Activated T-helper 1 cell treated with anti-CD3 and anti-CD28 coated beads, Interleukin-12 subunit alpha, Interleukin-12 subunit beta, Interleukin-2, Interleukin-4 antibody, amounts not matched to agents 30 ng/mL and 10 ng/mL and 1 ng/mL, durations not matched to agents 14 hours and 24 hours and 36 hours (primary cell): ENCODE measurements at regions of chr5 and their contacts with region 1.

Region 1: DNA sequence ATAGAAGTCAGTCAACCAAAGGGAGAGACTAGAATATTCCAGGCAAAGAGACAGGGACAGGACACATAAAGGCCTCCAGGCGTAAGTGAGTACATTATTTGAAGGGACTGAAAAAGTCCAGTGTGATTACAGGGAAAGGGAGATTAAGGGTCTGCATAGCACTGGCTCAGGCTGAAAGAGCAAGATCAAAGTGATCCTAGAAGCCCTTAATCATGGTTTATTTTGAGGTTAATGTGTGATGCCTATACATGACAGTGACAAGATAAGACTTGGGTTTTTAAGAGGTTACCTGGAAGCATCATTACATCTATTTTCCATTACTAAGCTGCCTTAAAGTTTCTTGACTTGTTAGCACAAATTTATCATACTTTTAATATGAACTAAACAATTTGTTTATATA is 25.8 kb downstream of the LMBRD2 start:
- DNase-seq: no peak
- H3K4me3 Mint-ChIP-seq: no peak overlapping the region
- H3K27ac Mint-ChIP-seq: no peak overlapping the region
- H3K4me1 Mint-ChIP-seq: peaks cover 12% of the 10 kb centered on the region
- H3K27me3 Mint-ChIP-seq: no peaks in the 10 kb centered on the region

Region 2: GRCh38 chr5:36151434-36152323 is 25.8 kb after region 1 on chr5 and contains the starts of genes LMBRD2 and SKP2:
- intact Hi-C with region 1: no loop called
- DNase-seq: peak; percentile 97
- H3K4me3 Mint-ChIP-seq: peak within 1 kb of the TSS; percentile 97
- H3K27ac Mint-ChIP-seq: peak within 1 kb of the TSS; percentile 79
- H3K4me1 Mint-ChIP-seq: peaks cover 59% of the 10 kb centered on the region
- H3K27me3 Mint-ChIP-seq: no peaks in the 10 kb centered on the region
- total RNA-seq, gene LMBRD2: 8.9 and 12.3 TPM in 2 replicates
- total RNA-seq, gene SKP2: 54.6 and 61.2 TPM in 2 replicates

Region 3: GRCh38 chr5:36193746-36194145 is 67.9 kb after region 1 on chr5:
- intact Hi-C with region 1: loop called (anchors 2 kb)
- DNase-seq: no peak
- H3K4me3 Mint-ChIP-seq: no peak overlapping the region
- H3K27ac Mint-ChIP-seq: no peak overlapping the region
- H3K4me1 Mint-ChIP-seq: no peaks in the 10 kb centered on the region
- H3K27me3 Mint-ChIP-seq: no peaks in the 10 kb centered on the region